CD14-positive monocyte (primary cell): ENCODE measurements at regions of chrX and their contacts with region 1.

Region 1: GRCh38 chrX:68710870-68711576 is 63.6 kb downstream of the STARD8 start:
- DNase-seq: peak in 2 of 3 donors; percentile 53 to 68
- H3K4me3 ChIP-seq: no peak overlapping the region
- H3K4me3 Mint-ChIP-seq: no peak overlapping the region
- H3K27ac ChIP-seq: peak overlapping the region in 1 of 2 donors; percentile 28
- H3K27ac Mint-ChIP-seq: peak overlapping the region in 1 of 7 donors; percentile 43
- H3K4me1 ChIP-seq: no peaks in the 10 kb centered on the region
- H3K4me1 Mint-ChIP-seq: peaks cover 9% of the 10 kb centered on the region
- H3K27me3 ChIP-seq: no peaks in the 10 kb centered on the region
- H3K27me3 Mint-ChIP-seq: peaks cover 0 to 4% (median 0%) of the 10 kb centered on the region in 3 donors
- CTCF ChIP-seq: peak; percentile 53

Region 2: DNA sequence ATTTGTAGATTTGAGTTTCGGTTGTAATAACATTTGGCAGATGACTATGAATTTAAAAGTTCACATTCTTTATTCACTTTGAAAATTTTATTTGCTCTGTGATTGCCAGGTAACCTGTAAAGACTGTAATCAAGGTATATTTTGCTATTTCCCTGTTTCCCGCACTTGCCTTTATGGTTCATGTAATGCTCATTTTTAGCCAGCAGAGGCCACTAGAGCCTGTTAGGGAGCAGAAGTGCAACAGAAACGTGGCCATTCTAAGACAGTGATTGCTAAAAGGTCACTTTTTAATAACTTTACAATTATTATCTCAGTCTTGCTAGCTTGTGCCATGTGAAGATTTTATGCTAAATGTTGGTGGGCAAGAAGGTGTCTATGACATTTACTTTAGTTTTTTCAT is 199.8 kb before region 1 on chrX:
- intact Hi-C with region 1: loop called (anchors 5 kb)
- DNase-seq: peak; percentile 29 to 45 (median 39)
- H3K4me3 ChIP-seq: no peak overlapping the region
- H3K4me3 Mint-ChIP-seq: no peak overlapping the region
- H3K27ac ChIP-seq: no peak overlapping the region
- H3K27ac Mint-ChIP-seq: no peak overlapping the region
- H3K4me1 ChIP-seq: no peaks in the 10 kb centered on the region
- H3K4me1 Mint-ChIP-seq: no peaks in the 10 kb centered on the region
- H3K27me3 ChIP-seq: no peaks in the 10 kb centered on the region
- H3K27me3 Mint-ChIP-seq: peaks cover 0 to 4% (median 0%) of the 10 kb centered on the region in 3 donors
- CTCF ChIP-seq: peak; percentile 74

Region 3: GRCh38 chrX:69014200-69014599 is 303.2 kb after region 1 on chrX:
- intact Hi-C with region 1: no loop called
- DNase-seq: no peak
- H3K4me3 ChIP-seq: no peak overlapping the region
- H3K4me3 Mint-ChIP-seq: no peak overlapping the region
- H3K27ac ChIP-seq: no peak overlapping the region
- H3K27ac Mint-ChIP-seq: no peak overlapping the region
- H3K4me1 ChIP-seq: no peaks in the 10 kb centered on the region
- H3K4me1 Mint-ChIP-seq: no peaks in the 10 kb centered on the region
- H3K27me3 ChIP-seq: no peaks in the 10 kb centered on the region
- H3K27me3 Mint-ChIP-seq: peaks cover 0 to 4% (median 0%) of the 10 kb centered on the region in 3 donors
- CTCF ChIP-seq: no peak